HEK293T (cell line): ENCODE measurements at regions of chr2 and their contacts with region 1.

Region 1: GRCh38 chr2:109545828-109546713 is 67.7 kb downstream of the SEPTIN10 start:
- DNase-seq: peak; percentile 67

Region 2: GRCh38 chr2:109535217-109535946 is 10.7 kb before region 1 on chr2:
- CTCF ChIA-PET with region 1: interaction called, 21 read pairs
- POLR2A ChIA-PET with region 1: no interaction called
- DNase-seq: no peak

Region 3: GRCh38 chr2:109592905-109593304 is 46.8 kb after region 1 on chr2:
- CTCF ChIA-PET with region 1: no interaction called
- POLR2A ChIA-PET with region 1: no interaction called
- DNase-seq: no peak

Region 4: GRCh38 chr2:109736177-109736827 is 190.2 kb after region 1 on chr2:
- CTCF ChIA-PET with region 1: interaction called, 16 read pairs
- POLR2A ChIA-PET with region 1: no interaction called
- DNase-seq: peak; percentile 53